ENCODE measurements at regions of chr11 and their contacts with region 1.

Region 1: GRCh38 chr11:75241036-75241905 is 697 bp downstream of the TPBGL start:
- DNase-seq: peak; percentile 99
- CTCF ChIP-seq: peak; percentile 100

Region 2: GRCh38 chr11:75004215-75004614 is 237.1 kb before region 1 on chr11:
- in situ Hi-C with region 1: no loop called
- DNase-seq: no peak
- CTCF ChIP-seq: no peak

Region 3: DNA sequence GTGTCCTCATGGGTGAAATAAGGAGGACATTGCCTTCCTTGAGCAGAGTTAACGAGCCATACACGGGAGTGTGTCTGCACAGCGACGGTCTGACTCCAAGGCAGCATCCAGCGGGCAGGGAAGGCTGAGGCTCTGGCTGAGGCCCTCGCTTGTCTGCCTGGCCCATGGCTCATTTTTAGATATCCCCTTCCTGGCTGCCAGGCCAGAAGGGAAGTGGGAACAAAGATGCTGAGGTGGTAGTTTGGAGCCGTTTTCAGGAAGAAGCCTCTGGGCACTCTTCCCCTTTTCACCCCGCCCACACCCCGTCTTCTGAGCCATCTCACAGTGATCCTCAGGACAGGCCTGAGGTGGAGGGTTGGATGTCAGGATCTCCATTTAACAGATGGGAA is 93.4 kb before region 1 on chr11:
- in situ Hi-C with region 1: no loop called
- DNase-seq: no peak
- CTCF ChIP-seq: no peak

Region 4: DNA sequence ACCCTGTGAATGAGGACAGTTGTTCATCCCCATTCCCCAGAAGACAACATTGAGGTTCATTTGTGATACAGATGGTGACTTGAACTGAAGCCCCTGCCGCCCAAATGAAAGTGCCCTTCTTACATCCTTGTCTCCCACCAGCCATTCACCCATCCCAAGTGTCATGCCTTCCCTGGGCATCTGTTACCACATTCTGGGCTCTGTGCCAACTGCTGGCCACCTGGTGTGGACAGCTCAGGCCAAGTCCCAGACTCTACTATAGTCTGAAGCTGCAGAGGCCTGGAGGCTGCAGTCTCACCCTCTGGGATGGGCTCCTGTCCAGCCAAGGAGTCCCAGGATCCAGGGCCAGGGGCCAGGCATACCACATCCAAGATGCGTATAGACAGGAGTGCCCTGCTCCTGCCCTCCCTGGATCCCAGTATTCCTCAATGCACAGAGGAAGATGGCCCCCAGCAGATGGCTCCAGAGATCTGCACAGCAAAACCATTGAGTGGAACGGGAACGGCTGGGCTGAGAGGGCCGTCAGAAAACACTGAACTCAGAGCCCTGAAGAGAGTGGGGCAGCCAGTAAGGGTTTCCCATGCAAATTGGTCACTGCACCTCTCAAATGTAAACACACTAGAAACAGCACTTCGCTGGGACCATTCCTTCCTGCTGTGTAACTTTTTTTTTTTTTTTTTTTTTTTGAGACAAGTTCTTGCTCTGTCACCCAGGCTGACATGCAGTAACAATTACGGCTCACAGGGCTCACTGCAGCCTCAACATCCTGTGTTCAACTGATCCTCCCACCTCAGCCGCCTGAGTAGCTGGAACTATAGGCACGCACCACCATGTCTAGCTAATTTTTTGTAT is 87.4 kb after region 1 on chr11:
- in situ Hi-C with region 1: loop called (anchors 25 kb)
- DNase-seq: peak; percentile 55
- CTCF ChIP-seq: peak; percentile 56